GM18951 (cell line): ENCODE measurements at regions of chr12 and their contacts with region 1.

Region 1: DNA sequence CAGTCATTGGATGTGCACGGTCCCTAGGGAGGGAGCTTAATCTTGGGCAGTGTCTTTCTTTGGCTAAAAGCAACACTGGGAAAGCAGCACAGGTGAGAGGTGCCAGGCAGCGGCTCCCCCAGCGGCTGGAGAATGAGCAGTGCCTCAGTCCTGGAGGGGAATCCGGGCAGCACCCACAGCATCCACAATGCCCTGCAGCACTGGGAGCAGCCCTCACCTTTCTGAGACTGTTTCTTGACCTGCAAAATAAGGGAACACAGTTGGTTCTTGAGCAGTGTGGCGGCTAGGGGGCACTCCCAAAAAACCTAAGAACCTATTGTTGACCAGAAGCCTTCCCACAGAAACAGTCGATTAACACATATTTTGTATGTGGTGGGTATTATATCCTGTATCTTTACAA is 75.8 kb downstream of the SINHCAF start:
- POLR2A ChIP-seq: no peak

Region 2: GRCh38 chr12:30874455-30875321 is 375.5 kb before region 1 on chr12:
- in situ Hi-C with region 1: no loop called
- POLR2A ChIP-seq: no peak

Region 3: GRCh38 chr12:31629756-31630732 is 379.9 kb after region 1 on chr12:
- in situ Hi-C with region 1: loop called (anchors 25 kb)
- POLR2A ChIP-seq: no peak